Left ventricle myocardium superior (tissue), 1 donor: ENCODE measurements at regions of chr15 and their contacts with region 1.

Region 1: GRCh38 chr15:100627789-100628395 is 25.5 kb downstream of the ASB7 start:
- DNase-seq: no peak
- ATAC-seq: peak; percentile 84

Region 2: DNA sequence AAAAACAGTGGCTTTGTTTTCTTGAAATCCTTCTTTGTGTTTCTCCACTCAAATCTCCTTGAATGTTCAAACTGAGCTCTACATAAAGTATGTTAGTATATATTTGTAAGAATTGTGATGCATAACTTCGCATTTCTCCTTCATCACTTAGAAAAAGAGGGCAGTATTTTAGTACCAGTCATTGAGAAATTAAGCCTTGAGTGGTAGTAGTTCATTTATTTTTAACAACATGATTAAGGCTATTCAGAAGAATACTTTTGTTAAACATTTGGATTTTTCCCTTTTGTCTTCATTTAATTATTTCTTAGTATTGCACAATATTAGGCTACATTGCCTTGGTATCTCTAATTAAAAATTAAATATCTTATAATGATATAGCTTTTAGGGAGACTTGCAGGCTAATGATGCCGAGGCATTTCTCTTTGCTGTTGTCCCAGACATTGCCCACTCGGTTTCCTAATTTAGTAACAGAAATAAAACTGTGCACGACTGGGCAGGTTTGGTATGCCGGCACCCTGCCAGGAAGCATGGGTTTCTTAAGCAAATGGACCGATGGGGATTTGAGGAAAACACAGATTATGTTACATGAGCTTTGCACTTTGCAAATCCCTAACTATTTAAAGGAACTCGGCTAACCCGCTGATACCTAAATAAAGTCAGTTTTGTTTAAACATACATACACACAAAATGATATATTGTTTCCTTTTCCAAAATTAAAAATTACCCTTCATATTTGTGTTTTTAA is 1322.0 kb before region 1 on chr15:
- intact Hi-C with region 1: no loop called
- DNase-seq: peak; percentile 73
- ATAC-seq: peak; percentile 66

Region 3: DNA sequence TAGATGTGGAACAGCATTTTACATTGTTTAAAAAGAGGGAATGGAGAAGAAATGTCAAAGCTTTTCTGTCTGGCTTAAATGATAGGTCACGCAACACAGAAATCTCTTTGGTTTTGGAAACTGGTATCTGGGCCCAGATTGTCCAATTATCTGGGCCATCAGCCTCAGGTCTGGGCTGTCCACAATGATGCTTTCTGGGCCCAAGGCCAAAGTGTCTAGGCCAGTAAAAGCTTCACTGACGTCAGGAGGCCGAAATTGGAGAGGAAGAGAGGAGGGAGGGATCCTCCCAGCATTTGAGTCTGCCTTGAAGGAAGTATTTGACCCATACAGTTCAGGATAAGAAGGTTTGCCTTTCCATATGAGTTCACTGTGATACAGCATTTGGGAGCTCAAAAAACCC is 191.0 kb after region 1 on chr15:
- intact Hi-C with region 1: no loop called
- DNase-seq: no peak
- ATAC-seq: no peak

Region 4: GRCh38 chr15:100873029-100873677 is 245.3 kb after region 1 on chr15:
- intact Hi-C with region 1: loop called (anchors 2 kb)
- DNase-seq: no peak
- ATAC-seq: peak; percentile 73

Region 5: GRCh38 chr15:100940767-100941379 is 313.0 kb after region 1 on chr15:
- intact Hi-C with region 1: no loop called
- DNase-seq: no peak
- ATAC-seq: no peak